PC-9 (cell line): ENCODE measurements at regions of chr14 and their contacts with region 1.

Region 1: DNA sequence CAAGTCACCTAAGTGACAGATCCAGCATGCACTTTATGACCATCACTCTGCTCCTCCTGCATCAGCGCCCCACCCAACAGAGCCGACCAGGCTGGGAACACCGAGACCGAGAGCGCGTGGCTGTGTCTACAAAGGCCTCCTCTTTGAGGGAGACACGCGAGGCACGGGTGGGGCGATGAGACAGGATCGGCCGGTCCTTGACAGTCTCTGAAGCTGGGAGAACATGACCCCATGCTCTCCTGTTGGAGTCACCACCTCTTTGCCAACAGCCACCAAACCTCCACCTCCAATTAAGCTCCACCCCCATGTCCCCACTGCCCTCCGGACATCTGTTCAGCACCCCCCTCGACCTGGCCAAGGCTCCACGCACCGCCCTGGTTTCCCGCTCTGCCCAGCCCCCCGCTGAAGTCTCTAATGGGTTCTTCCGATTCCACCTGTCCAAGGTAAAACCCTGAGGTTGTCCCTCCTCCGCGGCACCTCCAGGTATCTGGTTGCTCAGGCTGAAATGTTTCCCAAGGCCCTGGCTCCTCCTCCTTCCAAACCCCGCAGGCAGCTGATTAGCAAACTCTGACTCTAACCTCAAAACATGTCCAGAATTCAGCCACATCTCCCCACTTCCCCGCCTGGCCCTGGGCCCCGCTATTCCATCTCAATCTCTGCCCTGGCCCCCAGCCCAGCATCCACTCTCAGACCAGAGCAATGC is 31.5 kb downstream of the HSP90AA1 start:
- DNase-seq: peak; percentile 92 to 98
- H3K4me3 ChIP-seq: peak overlapping the region; percentile 43
- H3K27ac ChIP-seq: peak overlapping the region; percentile 48
- H3K4me1 ChIP-seq: peaks cover 36% of the 10 kb centered on the region
- H3K27me3 ChIP-seq: no peaks in the 10 kb centered on the region
- CTCF ChIP-seq: no peak

Region 2: DNA sequence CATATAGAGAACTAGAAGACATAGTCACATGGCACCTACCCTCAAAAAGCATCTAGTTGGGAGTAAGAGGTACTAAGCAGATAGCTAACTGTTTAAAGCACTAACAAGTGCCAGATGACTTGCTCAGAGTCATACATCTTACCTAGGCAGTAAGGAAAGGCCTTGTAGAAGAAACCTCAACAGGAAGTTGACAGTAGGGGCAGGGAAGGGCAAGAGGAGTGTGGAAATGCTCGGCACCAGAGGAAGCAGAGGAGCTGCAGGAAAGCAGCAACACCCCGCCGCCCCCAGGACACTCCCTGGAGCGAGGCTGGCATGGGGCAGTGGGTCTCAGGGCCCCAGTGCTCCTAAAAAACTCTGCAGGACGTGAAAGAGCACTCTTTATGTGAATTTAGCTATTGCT is 201.0 kb before region 1 on chr14:
- CTCF ChIA-PET with region 1: no interaction called
- POLR2A ChIA-PET with region 1: no interaction called
- intact Hi-C with region 1: no loop called
- DNase-seq: no peak
- H3K4me3 ChIP-seq: no peak overlapping the region
- H3K27ac ChIP-seq: no peak overlapping the region
- H3K4me1 ChIP-seq: no peaks in the 10 kb centered on the region
- H3K27me3 ChIP-seq: no peaks in the 10 kb centered on the region
- CTCF ChIP-seq: no peak

Region 3: GRCh38 chr14:102472791-102473150 is 417.4 kb after region 1 on chr14:
- CTCF ChIA-PET with region 1: no interaction called
- POLR2A ChIA-PET with region 1: interaction called, 13 read pairs
- intact Hi-C with region 1: no loop called
- DNase-seq: no peak
- H3K4me3 ChIP-seq: no peak overlapping the region
- H3K27ac ChIP-seq: no peak overlapping the region
- H3K4me1 ChIP-seq: peaks cover 21% of the 10 kb centered on the region
- H3K27me3 ChIP-seq: no peaks in the 10 kb centered on the region
- CTCF ChIP-seq: no peak